ENCODE measurements at regions of chr2 and their contacts with region 1.

Region 1: GRCh38 chr2:10043906-10044601 is 704 bp downstream of the KLF11 start:
- DNase-seq: peak; percentile 98
- H3K4me3 ChIP-seq: peak overlapping the region; percentile 59 to 68
- H3K27ac ChIP-seq: peak overlapping the region; percentile 58 to 77; a peak in 2 of 4 replicates
- H3K4me1 ChIP-seq: peaks cover 6 to 22% of the 10 kb centered on the region in 2 experiments; a peak in 1 of 4 replicates
- H3K27me3 ChIP-seq: no peaks in the 10 kb centered on the region
- CTCF ChIP-seq: no peak
- EP300 ChIP-seq: no peak
- RAD21 ChIP-seq: no peak

Region 2: DNA sequence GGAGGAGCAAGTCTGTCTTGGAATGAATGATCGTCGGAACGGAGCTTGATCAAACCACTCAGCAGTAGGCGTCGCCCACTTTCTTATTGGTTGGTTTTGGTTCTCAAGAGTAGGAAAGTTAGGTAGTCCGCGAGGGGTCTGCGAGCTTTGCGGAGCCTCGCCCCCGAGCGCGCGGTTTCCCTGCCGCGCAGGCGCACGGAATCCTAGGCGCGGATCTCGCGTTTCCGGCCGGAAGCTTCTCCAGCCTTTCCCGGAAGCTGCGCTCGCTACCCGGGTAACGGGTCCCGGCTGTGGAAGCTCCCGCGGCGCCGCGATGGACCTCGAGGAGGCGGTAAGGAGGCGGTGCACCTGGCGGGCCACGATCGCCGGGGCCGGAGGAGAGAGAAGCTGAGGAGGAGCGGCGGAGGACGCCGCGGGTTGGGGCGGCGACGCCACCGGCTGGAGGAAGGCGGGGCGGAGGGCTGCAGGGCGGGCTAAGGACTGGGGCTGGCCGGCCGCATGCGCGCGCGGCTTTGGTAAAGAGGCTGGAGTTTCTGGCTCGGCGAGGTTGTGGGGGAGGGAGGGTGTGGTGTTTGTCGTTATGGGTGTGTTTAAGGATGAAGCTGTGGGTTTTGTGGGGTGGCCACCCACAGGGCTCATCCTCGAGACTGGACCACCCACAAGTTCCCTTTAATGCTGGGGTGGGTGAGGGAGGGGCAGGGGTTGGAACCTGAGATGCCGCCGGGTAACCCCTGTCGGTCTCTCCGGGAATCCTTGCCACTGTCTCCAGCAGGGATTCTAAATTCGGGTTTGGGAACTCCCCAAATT is 200.6 kb before region 1 on chr2 and contains the start of gene TAF1B:
- CTCF ChIA-PET with region 1: interaction called, 22 read pairs
- POLR2A ChIA-PET with region 1: interaction called, 11 read pairs
- DNase-seq: peak; percentile 99
- H3K4me3 ChIP-seq: peak within 1 kb of the TSS; percentile 60 to 86
- H3K27ac ChIP-seq: peak within 1 kb of the TSS; percentile 89 to 95
- H3K4me1 ChIP-seq: peaks cover 15 to 20% of the 10 kb centered on the region in 2 experiments
- H3K27me3 ChIP-seq: no peaks in the 10 kb centered on the region
- CTCF ChIP-seq: peak; percentile 43
- EP300 ChIP-seq: no peak
- RAD21 ChIP-seq: no peak
- polyA plus RNA-seq, gene TAF1B: 7.8 and 8.3 TPM in 2 replicates

Region 3: DNA sequence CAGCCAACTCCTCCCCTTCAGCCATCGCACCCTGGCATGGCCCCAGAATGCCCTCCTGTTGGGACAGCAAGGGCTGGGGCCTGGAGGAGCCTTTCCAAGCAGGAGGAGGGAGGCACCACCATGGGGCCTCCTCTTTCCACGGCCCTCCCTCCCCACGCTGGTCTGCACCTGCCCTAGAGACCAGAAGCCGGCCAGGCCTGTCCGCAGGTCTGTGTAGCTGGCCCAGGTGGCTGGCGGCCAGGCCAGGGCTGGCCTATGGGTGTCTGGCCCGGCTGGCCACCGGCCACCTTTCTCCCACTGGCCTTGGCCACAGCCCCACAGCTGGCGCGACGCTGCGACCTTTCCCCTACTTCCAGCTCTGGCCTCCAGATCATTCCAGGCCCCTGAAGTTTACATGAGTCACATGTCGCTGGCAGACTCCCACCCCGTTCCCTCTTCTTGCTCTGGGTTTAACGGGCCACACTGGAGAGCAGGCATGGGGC is 34.2 kb before region 1 on chr2:
- CTCF ChIA-PET with region 1: interaction called, 17 read pairs
- POLR2A ChIA-PET with region 1: no interaction called
- DNase-seq: peak; percentile 70
- H3K4me3 ChIP-seq: no peak overlapping the region
- H3K27ac ChIP-seq: peak overlapping the region in 1 of 2 experiments; percentile 90; a peak in 2 of 4 replicates
- H3K4me1 ChIP-seq: peaks cover 6 to 52% of the 10 kb centered on the region in 2 experiments; a peak in 2 of 4 replicates
- H3K27me3 ChIP-seq: no peaks in the 10 kb centered on the region
- CTCF ChIP-seq: no peak
- EP300 ChIP-seq: peak in 1 of 2 experiments; percentile 67; a peak in 2 of 4 replicates
- RAD21 ChIP-seq: no peak; the same call in 1 of the 2 replicates

Region 4: DNA sequence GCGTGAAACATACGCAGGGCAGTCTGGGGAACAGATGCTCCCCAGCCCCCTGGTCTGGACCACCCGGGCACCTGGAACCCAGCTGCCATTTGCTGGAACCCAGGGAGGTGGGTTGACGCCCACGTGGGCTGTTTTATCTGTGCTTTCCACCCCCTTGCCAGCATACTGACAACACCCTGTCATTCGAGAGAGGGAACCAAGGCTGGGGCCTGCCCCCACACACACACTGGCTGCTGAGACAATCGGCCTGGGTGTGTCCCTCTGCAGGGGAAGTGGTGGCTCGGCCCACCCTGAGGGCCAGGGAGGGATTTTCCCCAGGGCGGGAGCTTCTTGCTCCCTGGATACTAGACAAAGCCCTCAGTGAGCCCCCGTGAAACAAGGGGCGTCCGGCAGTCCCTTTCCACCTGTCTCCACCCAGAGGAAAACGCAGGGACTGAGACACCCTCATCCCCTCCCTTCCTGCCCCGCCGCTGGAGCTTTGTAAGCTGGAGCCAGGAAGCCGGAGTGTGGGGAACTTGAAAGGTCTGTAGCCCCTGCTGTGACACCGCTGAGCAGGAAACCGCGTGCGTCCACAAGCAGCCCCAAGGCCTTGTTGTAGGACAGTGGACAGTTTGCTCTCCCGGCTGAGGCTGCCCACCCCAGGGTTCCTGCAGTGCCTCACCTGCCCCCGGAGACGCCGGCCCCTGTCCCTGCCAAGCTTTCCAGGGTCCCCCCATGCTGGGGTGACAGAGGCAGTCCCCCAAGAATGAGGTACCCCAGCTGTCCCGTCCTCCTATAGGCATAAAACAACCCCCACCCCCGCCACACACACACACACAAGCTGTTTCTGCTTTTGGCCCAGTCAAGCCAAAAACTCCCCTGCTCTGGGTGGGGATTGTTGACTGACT is 14.8 kb before region 1 on chr2:
- CTCF ChIA-PET with region 1: interaction called, 22 read pairs
- POLR2A ChIA-PET with region 1: no interaction called
- DNase-seq: no peak
- H3K4me3 ChIP-seq: no peak overlapping the region
- H3K27ac ChIP-seq: no peak overlapping the region
- H3K4me1 ChIP-seq: peaks cover 0 to 16% of the 10 kb centered on the region in 2 experiments; a peak in 1 of 4 replicates
- H3K27me3 ChIP-seq: no peaks in the 10 kb centered on the region
- CTCF ChIP-seq: no peak
- EP300 ChIP-seq: no peak
- RAD21 ChIP-seq: no peak

Region 5: GRCh38 chr2:10064932-10065772 is 21.1 kb after region 1 on chr2:
- CTCF ChIA-PET with region 1: interaction called, 52 read pairs
- POLR2A ChIA-PET with region 1: no interaction called
- DNase-seq: no peak
- H3K4me3 ChIP-seq: no peak overlapping the region
- H3K27ac ChIP-seq: no peak overlapping the region
- H3K4me1 ChIP-seq: peaks cover 0 to 8% of the 10 kb centered on the region in 2 experiments; a peak in 1 of 4 replicates
- H3K27me3 ChIP-seq: no peaks in the 10 kb centered on the region
- CTCF ChIP-seq: no peak
- EP300 ChIP-seq: no peak
- RAD21 ChIP-seq: no peak

Measured in SK-N-SH (cell line).